T-cell (primary cell): ENCODE measurements at regions of chr7 and their contacts with region 1.

Region 1: DNA sequence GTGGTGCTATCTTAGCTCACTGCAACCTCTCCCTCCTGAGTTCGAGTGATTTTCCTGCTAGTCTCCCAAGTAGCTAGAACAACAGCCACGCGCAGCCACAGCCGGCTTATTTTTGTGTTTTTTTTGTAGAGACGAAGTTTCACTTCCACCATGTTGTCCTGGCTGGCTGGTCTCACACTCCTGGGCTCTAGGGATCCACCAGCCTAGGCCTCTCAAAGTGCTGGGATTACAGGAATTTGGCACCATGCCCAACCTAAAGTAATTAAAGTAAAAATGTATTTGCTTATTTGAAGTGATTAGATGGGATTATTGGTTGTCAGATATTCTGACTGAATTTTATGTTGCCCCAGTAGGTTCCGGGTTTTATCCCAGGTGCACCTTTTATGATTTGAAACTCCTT is 22.7 kb downstream of the LUC7L2 start:
- DNase-seq: no peak
- ATAC-seq: no peak
- H3K4me3 ChIP-seq: no peak overlapping the region
- H3K4me3 Mint-ChIP-seq: no peak overlapping the region
- H3K27ac ChIP-seq: no peak overlapping the region
- H3K27ac Mint-ChIP-seq: no peak overlapping the region
- H3K4me1 ChIP-seq: no peaks in the 10 kb centered on the region
- H3K4me1 Mint-ChIP-seq: peaks cover 0 to 2% (median 0%) of the 10 kb centered on the region in 3 donors
- H3K27me3 ChIP-seq: no peaks in the 10 kb centered on the region
- H3K27me3 Mint-ChIP-seq: no peaks in the 10 kb centered on the region

Region 2: DNA sequence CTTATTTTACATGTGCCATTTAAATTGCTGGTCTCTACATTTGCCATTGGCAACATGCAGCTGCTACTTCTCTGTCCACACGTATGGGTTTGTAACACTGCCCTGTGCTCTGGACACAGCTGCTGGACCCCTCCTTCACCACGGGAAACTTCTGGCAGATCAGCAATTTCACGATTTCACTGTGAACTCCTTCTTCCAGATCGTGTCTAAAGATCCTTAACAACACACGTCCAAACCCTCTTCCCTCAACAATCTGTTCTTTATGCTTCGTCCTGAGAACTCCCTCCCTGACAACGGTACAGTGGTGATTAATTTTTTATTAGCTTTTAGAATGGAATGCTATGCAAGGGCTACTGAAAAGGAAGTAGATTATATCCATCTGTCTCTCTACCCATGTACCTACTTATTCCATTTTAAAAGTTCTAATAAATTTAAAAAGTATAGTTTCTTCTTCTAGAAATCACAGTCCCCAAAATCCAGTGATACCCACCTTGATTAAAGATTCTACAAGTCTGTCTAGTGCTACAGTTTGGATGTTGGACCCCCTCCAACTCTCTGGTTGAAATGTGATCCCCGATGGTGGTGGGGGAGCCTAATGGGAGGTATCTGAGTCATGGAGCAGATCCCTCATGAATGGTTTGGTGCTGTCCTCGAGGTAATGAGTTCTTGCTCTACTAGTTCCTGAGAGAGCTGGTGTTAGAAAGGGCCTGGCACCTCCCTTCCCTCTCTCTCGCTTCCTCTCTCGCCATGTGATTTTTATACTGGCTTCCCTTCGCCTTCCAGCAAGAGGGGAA is 482.2 kb before region 1 on chr7:
- CTCF ChIA-PET with region 1: no interaction called
- POLR2A ChIA-PET with region 1: interaction called in 1 of 2 experiments, 17 read pairs
- DNase-seq: no peak
- ATAC-seq: no peak
- H3K4me3 ChIP-seq: no peak overlapping the region
- H3K4me3 Mint-ChIP-seq: no peak overlapping the region
- H3K27ac ChIP-seq: no peak overlapping the region
- H3K27ac Mint-ChIP-seq: no peak overlapping the region
- H3K4me1 ChIP-seq: peaks cover 23 to 31% of the 10 kb centered on the region in 2 experiments
- H3K4me1 Mint-ChIP-seq: peaks cover 48 to 64% (median 59%) of the 10 kb centered on the region in 3 donors
- H3K27me3 ChIP-seq: peaks cover 0 to 11% of the 10 kb centered on the region in 2 experiments
- H3K27me3 Mint-ChIP-seq: peaks cover 4 to 17% of the 10 kb centered on the region in 2 donors

Region 3: GRCh38 chr7:139139150-139139549 is 243.3 kb before region 1 on chr7:
- CTCF ChIA-PET with region 1: no interaction called
- POLR2A ChIA-PET with region 1: interaction called in 1 of 2 experiments, 11 read pairs
- DNase-seq: no peak
- ATAC-seq: no peak
- H3K4me3 ChIP-seq: no peak overlapping the region
- H3K4me3 Mint-ChIP-seq: no peak overlapping the region
- H3K27ac ChIP-seq: no peak overlapping the region
- H3K27ac Mint-ChIP-seq: no peak overlapping the region
- H3K4me1 ChIP-seq: peaks cover 0 to 3% of the 10 kb centered on the region in 2 experiments
- H3K4me1 Mint-ChIP-seq: peaks cover 0 to 2% (median 2%) of the 10 kb centered on the region in 3 donors
- H3K27me3 ChIP-seq: no peaks in the 10 kb centered on the region
- H3K27me3 Mint-ChIP-seq: no peaks in the 10 kb centered on the region

Region 4: DNA sequence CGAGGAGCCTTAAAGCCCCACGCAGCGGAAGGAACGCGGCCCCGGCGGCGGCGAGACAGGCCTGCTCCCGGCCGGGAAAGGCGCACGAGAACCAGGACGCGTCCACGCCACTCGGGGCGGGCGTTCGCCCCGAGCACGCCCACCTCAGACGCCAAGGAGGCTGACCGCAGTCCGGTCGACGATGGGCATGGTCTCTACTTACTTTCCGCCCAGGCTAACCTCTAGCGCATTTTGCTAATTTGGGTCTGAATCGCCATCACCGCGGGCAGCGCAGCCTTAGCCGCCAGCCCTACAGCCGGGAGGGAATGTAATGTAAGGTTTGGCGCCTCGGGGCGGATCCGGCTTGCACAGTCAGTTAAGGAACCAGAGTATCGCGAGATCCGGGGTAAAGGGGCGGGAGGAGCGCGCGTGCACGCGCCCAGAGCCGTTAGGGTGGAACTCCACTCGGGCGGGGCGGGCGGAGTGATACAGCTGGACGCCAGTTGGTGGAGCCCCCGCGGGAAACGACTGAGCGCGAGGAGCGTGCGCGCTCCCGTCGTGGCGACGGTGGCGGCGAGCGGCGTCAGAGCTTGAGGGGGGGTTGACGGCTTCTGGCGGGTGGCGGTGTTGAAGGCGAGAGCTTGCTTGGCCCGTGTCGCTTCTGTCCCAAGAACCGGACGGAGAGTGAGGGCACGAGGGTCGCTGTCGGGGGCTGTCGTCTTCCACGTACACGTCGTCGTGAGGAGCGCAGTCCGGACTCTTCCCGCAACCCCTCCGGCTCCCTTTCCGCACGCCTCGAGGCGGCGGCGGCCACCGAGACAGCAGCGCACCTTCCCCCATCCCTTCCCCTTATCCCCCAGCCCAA is 22.9 kb before region 1 on chr7 and contains the start of gene LUC7L2:
- CTCF ChIA-PET with region 1: no interaction called
- POLR2A ChIA-PET with region 1: interaction called in 1 of 2 experiments, 15 read pairs
- DNase-seq: peak; percentile 99 to 100 (median 100)
- ATAC-seq: peak; percentile 77 to 84 (median 81)
- H3K4me3 ChIP-seq: peak within 1 kb of the TSS; percentile 79 to 100
- H3K4me3 Mint-ChIP-seq: peak within 1 kb of the TSS; percentile 97 to 99 (median 97)
- H3K27ac ChIP-seq: peak within 1 kb of the TSS; percentile 99
- H3K27ac Mint-ChIP-seq: peak within 1 kb of the TSS; percentile 99
- H3K4me1 ChIP-seq: peaks cover 19 to 25% of the 10 kb centered on the region in 2 experiments
- H3K4me1 Mint-ChIP-seq: peaks cover 46 to 61% (median 49%) of the 10 kb centered on the region in 3 donors
- H3K27me3 ChIP-seq: no peaks in the 10 kb centered on the region
- H3K27me3 Mint-ChIP-seq: no peaks in the 10 kb centered on the region
- total RNA-seq, gene LUC7L2: 131 to 169 (median 142) TPM

Region 5: GRCh38 chr7:139394540-139394939 is 12.1 kb after region 1 on chr7:
- CTCF ChIA-PET with region 1: no interaction called
- POLR2A ChIA-PET with region 1: interaction called, 6 to 16 read pairs
- DNase-seq: peak in 1 of 35 experiments; percentile 34
- ATAC-seq: peak; percentile 68 to 88 (median 76)
- H3K4me3 ChIP-seq: no peak overlapping the region
- H3K4me3 Mint-ChIP-seq: peak overlapping the region; percentile 2 to 56 (median 3)
- H3K27ac ChIP-seq: no peak overlapping the region
- H3K27ac Mint-ChIP-seq: peak overlapping the region; percentile 53 to 77
- H3K4me1 ChIP-seq: peaks cover 14 to 20% of the 10 kb centered on the region in 2 experiments
- H3K4me1 Mint-ChIP-seq: peaks cover 32 to 54% (median 54%) of the 10 kb centered on the region in 3 donors
- H3K27me3 ChIP-seq: no peaks in the 10 kb centered on the region
- H3K27me3 Mint-ChIP-seq: no peaks in the 10 kb centered on the region